ENCODE measurements at regions of chr20 and their contacts with region 1.

Region 1: DNA sequence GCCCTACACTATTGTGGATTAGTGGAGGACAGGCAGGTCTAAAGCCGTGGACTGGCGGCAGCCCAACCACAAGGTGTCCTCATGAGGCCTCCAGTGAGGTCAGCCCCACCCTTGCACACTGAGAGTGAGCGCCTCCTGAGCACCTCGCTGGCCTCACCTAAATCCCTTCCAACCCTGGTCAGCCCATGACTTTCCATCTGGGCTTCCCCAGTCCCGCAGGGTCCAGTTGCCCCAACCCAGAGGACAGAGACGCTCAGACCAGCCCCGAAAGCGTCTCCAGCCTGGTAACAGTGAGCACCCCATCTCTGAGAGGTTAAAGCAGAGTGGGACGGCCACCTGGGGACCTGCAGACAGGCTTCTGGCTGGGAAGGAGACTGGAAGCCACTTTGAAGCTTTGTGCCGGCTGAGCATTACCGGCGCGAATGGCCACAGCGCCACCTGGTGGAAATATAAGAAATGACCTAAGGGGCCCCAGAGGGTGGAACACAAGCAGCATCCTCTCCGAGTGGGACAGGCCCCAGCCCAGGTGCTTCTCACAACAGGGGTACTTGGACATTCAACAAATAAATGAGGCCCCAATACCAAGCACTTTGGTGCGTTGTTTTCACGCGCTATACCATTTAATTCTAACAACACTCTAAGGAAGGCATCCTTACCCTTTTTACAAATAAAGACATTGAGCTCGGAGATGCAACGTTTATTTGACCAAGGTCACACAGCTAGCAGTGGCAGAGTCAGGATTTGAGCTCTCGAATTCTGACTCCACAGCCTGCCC is 65.7 kb upstream of the TOP1 start:
- DNase-seq: peak; percentile 61 to 78
- ATAC-seq: peak; percentile 79 to 95 (median 87)
- H3K4me3 ChIP-seq: no peak overlapping the region
- H3K27ac ChIP-seq: no peak overlapping the region
- H3K4me1 ChIP-seq: no peaks in the 10 kb centered on the region
- H3K27me3 ChIP-seq: no peaks in the 10 kb centered on the region
- CTCF ChIP-seq: peak; percentile 92

Region 2: DNA sequence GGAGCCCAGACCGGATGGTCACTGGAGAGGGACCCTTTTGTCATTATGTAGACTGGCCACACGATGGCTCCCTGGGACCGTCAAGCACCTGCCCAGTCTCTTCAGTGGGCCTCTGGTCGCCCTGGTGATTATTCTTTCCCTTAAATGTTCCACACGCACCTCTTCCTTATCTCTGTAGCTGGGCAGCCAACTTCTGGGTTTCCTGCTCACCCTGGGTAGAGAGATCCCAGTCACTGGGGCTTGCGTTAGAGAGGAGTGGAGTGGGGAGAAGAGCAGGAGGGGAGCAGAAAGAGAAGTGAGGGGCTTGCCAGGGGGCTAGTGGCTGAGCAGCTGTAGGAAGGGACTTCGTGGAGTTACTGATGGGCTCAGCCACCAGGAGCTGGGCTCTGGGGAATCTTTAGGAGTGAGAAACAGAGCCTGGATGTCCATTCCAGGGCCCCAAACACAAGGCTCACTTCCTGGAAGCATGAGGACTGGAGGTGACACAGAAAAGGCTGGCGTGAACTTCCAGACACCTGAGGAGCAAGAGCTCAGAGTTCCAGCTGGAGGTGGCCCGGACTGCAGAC is 1850.7 kb before region 1 on chr20:
- intact Hi-C with region 1: loop called in 1 of 2 experiments (anchors 10 kb)
- DNase-seq: peak in 1 of 2 donors; percentile 30
- ATAC-seq: peak; percentile 76 to 93 (median 92)
- H3K4me3 ChIP-seq: no peak overlapping the region
- H3K27ac ChIP-seq: no peak overlapping the region
- H3K4me1 ChIP-seq: no peaks in the 10 kb centered on the region
- H3K27me3 ChIP-seq: peaks cover 0 to 19% (median 3%) of the 10 kb centered on the region in 3 donors
- CTCF ChIP-seq: peak; percentile 72

Region 3: GRCh38 chr20:39270837-39271604 is 1691.9 kb before region 1 on chr20:
- intact Hi-C with region 1: loop called (anchors 10 kb)
- DNase-seq: no peak
- ATAC-seq: peak in 2 of 4 donors; percentile 19 to 26
- H3K4me3 ChIP-seq: no peak overlapping the region
- H3K27ac ChIP-seq: no peak overlapping the region
- H3K4me1 ChIP-seq: no peaks in the 10 kb centered on the region
- H3K27me3 ChIP-seq: no peaks in the 10 kb centered on the region
- CTCF ChIP-seq: no peak

Region 4: DNA sequence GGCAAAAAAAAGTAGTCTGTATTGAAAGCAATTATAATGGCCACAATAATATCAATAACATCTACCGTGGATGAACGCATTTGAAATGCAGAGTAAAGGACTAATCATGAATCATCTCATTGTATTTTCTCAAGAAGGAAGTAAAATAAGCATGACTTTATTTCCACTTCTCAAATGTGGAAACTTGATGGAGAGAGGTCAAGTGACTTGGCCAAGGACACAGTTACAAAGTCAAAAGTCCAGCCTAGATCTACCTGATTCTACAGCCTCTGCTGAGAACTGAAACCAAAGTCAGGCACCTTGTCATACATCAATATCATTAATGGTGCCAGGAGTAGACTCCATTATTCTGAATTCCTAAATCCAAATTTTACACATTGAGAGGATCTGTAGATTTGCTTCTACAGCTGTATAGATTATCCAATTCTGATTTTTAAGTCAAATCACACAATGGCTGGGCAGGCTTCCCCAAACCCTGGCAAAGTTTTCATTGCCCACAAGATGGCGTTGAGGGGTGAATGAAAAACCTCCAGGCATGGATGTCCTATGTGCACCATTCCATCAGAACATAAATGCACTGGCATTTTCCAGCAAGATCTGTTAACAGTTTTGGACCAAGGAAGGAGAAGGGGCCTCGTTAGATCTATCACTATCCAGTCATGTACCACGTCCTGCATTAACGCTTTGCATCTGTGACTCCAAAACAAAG is 696.9 kb before region 1 on chr20:
- intact Hi-C with region 1: loop called in 1 of 2 experiments (anchors 10 kb)
- DNase-seq: no peak
- ATAC-seq: peak; percentile 55 to 87 (median 71)
- H3K4me3 ChIP-seq: no peak overlapping the region
- H3K27ac ChIP-seq: no peak overlapping the region
- H3K4me1 ChIP-seq: no peaks in the 10 kb centered on the region
- H3K27me3 ChIP-seq: no peaks in the 10 kb centered on the region
- CTCF ChIP-seq: peak; percentile 54

Region 5: GRCh38 chr20:40990542-40991120 is 27.7 kb after region 1 on chr20:
- intact Hi-C with region 1: loop called in 1 of 2 experiments (anchors 1 kb)
- DNase-seq: peak; percentile 74 to 83
- ATAC-seq: peak; percentile 97 to 99 (median 98)
- H3K4me3 ChIP-seq: no peak overlapping the region
- H3K27ac ChIP-seq: no peak overlapping the region
- H3K4me1 ChIP-seq: no peaks in the 10 kb centered on the region
- H3K27me3 ChIP-seq: no peaks in the 10 kb centered on the region
- CTCF ChIP-seq: peak; percentile 83

Region 6: GRCh38 chr20:41339507-41340326 is 376.8 kb after region 1 on chr20:
- intact Hi-C with region 1: loop called in 1 of 2 experiments (anchors 10 kb)
- DNase-seq: peak; percentile 81 to 90
- ATAC-seq: peak; percentile 84 to 93 (median 86)
- H3K4me3 ChIP-seq: peak overlapping the region; percentile 52
- H3K27ac ChIP-seq: peak overlapping the region; percentile 60
- H3K4me1 ChIP-seq: peaks cover 11% of the 10 kb centered on the region
- H3K27me3 ChIP-seq: no peaks in the 10 kb centered on the region
- CTCF ChIP-seq: peak; percentile 100